ENCODE measurements at regions of chr20 and their contacts with region 1.

Region 1: DNA sequence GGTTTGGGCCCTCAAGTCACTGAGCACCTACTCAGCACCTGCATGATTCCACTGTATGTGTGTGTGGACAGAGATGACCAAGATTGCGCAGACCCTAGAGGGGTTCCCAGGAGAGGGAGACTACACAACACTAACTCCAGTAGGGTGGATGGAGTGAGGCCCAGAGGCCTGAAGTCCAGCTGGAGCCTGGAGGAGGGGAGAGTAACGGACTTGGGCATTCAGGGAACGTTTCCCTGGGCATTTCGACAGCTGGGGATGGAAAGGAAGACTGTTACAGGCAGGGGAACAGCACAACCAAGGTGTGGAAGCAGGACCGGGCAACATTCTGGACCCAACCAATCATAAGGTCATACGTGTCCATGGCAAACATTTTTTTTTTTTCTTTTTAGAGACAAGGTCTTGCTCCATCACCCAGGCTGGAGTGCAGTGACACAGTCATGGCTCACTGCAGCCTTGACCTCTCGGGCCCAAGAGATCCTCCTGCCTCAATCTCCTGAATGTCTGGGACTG is 11.1 kb upstream of the CEBPB start:
- DNase-seq: no peak
- ATAC-seq: no peak
- H3K4me3 Mint-ChIP-seq: no peak overlapping the region
- H3K27ac Mint-ChIP-seq: no peak overlapping the region
- H3K4me1 Mint-ChIP-seq: no peaks in the 10 kb centered on the region
- H3K27me3 Mint-ChIP-seq: no peaks in the 10 kb centered on the region
- CTCF ChIP-seq: no peak

Region 2: GRCh38 chr20:50198180-50198666 is 18.7 kb after region 1 on chr20:
- CTCF ChIA-PET with region 1: no interaction called
- POLR2A ChIA-PET with region 1: no interaction called
- intact Hi-C with region 1: no loop called
- DNase-seq: no peak
- ATAC-seq: no peak
- H3K4me3 Mint-ChIP-seq: no peak overlapping the region
- H3K27ac Mint-ChIP-seq: no peak overlapping the region
- H3K4me1 Mint-ChIP-seq: peaks cover 17% of the 10 kb centered on the region
- H3K27me3 Mint-ChIP-seq: no peaks in the 10 kb centered on the region
- CTCF ChIP-seq: no peak

Region 3: DNA sequence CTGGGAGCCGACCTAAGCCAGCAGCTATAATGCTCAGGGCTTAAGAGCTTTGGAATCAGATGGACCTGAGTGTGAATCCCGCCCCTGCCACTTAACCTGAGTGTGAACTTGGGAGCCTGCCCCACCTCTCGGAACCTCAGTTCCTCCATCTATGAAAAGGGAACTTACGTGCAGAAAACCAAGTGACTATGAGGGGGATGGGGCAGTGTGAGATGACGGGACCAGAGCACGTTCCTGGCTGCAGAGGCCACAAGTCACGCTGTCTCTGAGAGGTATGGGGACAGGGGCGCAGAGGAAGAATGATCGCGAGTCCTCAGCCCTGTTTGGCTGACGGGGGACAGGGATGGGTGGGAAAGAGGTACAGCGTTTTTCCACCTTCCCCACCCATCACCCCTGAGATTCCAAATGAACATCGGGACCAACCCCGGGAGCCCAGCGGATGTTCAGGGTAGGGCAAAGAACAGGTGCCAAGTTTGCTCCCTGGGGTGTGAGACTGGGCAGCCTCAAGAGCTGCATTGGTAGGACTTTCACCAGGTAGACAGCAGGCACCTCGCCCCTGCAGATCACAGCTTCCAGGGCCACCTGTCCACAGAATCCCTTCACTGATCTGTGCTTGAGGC is 96.7 kb after region 1 on chr20:
- CTCF ChIA-PET with region 1: no interaction called
- POLR2A ChIA-PET with region 1: interaction called, 11 read pairs
- intact Hi-C with region 1: no loop called
- DNase-seq: no peak
- ATAC-seq: no peak
- H3K4me3 Mint-ChIP-seq: no peak overlapping the region
- H3K27ac Mint-ChIP-seq: peak overlapping the region; percentile 30
- H3K4me1 Mint-ChIP-seq: no peaks in the 10 kb centered on the region
- H3K27me3 Mint-ChIP-seq: peaks cover 35% of the 10 kb centered on the region
- CTCF ChIP-seq: no peak